ENCODE measurements at regions of chr11 and their contacts with region 1.

Region 1: DNA sequence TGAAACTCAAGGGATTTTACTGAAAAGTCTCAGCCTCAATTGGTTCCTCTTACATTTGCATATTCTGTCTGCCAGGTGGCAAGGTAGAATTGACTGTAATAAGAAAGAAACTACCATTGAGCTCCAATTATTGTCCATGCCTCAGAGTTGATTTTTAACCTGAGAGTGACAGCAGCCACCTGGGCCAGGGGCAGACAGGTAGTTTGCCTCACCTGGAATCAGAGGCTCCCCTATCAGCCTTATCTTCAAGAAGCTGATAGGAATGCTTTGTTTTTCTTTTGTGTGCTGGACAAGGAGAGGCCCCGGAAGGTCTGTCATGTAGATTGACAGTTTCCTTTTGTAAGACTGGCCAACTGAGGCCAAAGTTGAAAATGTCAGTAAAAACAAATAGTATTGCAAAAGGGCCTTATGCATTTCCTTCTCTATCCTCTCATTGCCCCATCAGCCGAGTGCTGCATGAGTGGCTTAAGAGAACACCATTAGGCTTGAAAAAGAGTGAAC is 34.1 kb downstream of the CD44 start:
- DNase-seq: no peak
- H3K4me3 ChIP-seq: no peak overlapping the region
- H3K27ac ChIP-seq: peak overlapping the region; percentile 49 to 75
- H3K4me1 ChIP-seq: peaks cover 15 to 52% of the 10 kb centered on the region in 2 donors
- H3K27me3 ChIP-seq: no peaks in the 10 kb centered on the region
- CTCF ChIP-seq: no peak

Region 2: GRCh38 chr11:34599406-34599901 is 573.6 kb before region 1 on chr11:
- intact Hi-C with region 1: no loop called
- DNase-seq: no peak
- H3K4me3 ChIP-seq: no peak overlapping the region
- H3K27ac ChIP-seq: no peak overlapping the region
- H3K4me1 ChIP-seq: no peaks in the 10 kb centered on the region
- H3K27me3 ChIP-seq: no peaks in the 10 kb centered on the region
- CTCF ChIP-seq: no peak

Region 3: GRCh38 chr11:34874202-34874601 is 298.9 kb before region 1 on chr11:
- intact Hi-C with region 1: no loop called
- DNase-seq: no peak
- H3K4me3 ChIP-seq: no peak overlapping the region
- H3K27ac ChIP-seq: no peak overlapping the region
- H3K4me1 ChIP-seq: no peaks in the 10 kb centered on the region
- H3K27me3 ChIP-seq: no peaks in the 10 kb centered on the region
- CTCF ChIP-seq: no peak

Region 4: DNA sequence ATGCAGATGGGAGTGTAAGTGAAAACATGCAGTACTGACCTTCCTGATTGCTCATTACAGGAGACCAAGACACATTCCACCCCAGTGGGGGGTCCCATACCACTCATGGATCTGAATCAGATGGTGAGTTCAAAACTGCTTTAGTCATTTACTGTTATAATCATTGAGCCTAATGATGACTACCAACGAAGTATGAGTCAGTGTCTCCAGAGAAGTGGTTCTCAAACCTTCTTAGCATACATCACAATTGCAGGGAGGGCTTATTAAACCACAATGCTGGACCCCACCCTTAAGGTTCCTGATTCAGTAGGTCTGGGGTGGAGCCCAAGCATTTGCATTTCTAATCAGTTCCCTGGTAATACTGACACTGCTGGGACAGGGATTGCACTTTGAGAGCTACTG is 41.7 kb after region 1 on chr11:
- intact Hi-C with region 1: loop called (anchors 5 kb)
- DNase-seq: no peak
- H3K4me3 ChIP-seq: no peak overlapping the region
- H3K27ac ChIP-seq: peak overlapping the region in 1 of 2 donors; percentile 35
- H3K4me1 ChIP-seq: peaks cover 0 to 8% of the 10 kb centered on the region in 2 donors
- H3K27me3 ChIP-seq: no peaks in the 10 kb centered on the region
- CTCF ChIP-seq: no peak

Region 5: DNA sequence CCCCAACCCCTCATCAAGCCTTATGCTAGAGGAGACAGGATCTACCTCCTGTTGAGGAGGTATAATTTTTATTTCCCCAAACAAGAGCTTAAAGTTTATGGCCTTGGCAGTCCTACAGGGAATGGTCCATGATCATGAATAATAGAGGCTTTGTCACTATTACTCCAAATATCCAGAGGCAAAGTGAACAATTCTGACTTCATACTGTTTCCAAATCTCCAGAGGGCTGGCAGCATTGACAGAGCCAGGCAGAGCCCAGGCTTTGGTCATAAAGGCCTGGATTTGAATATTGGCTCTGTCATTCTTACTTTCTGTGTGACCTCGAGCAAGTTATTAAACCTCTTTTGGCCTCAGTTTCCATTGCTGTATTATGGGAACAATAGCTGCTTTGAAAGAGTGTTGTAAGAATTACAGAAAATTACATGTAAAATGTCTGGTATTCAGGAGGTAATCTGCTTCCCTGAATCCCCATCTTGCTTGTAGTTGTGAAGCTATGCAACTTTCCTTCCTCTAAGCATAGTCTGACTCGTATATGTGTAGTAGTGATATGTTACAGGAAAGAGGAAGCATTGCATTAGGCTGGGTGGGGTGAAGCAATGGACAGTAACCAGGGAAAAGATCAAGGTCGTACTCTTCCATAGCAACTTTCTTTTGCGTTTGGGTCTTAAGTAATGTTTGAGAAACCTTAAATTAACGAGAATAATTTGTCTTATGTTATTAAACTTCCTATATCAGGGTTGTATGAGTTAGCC is 54.7 kb after region 1 on chr11:
- intact Hi-C with region 1: no loop called
- DNase-seq: no peak
- H3K4me3 ChIP-seq: no peak overlapping the region
- H3K27ac ChIP-seq: peak overlapping the region in 1 of 2 donors; percentile 29
- H3K4me1 ChIP-seq: no peaks in the 10 kb centered on the region
- H3K27me3 ChIP-seq: no peaks in the 10 kb centered on the region
- CTCF ChIP-seq: no peak